Ascending aorta (tissue), 2 donors: ENCODE measurements at regions of chr11 and their contacts with region 1.

Region 1: GRCh38 chr11:12377824-12378593 is 638 bp downstream of the PARVA start:
- DNase-seq: peak in 1 of 2 donors; percentile 91
- H3K4me3 ChIP-seq: peak overlapping the region; percentile 88
- H3K27ac ChIP-seq: peak overlapping the region; percentile 97
- H3K4me1 ChIP-seq: peaks cover 0 to 21% of the 10 kb centered on the region in 2 donors
- H3K27me3 ChIP-seq: no peaks in the 10 kb centered on the region
- CTCF ChIP-seq: peak in 2 of 3 experiments; percentile 5 to 18

Region 2: GRCh38 chr11:12331239-12331874 is 46.7 kb before region 1 on chr11:
- intact Hi-C with region 1: loop called (anchors 2 kb)
- DNase-seq: peak in 1 of 2 donors; percentile 88
- H3K4me3 ChIP-seq: no peak overlapping the region
- H3K27ac ChIP-seq: no peak overlapping the region
- H3K4me1 ChIP-seq: peaks cover 0 to 3% of the 10 kb centered on the region in 2 donors
- H3K27me3 ChIP-seq: no peaks in the 10 kb centered on the region
- CTCF ChIP-seq: peak; percentile 63 to 78 (median 74)

Region 3: GRCh38 chr11:12411806-12412727 is 34.1 kb after region 1 on chr11:
- intact Hi-C with region 1: loop called (anchors 1 kb)
- DNase-seq: peak in 1 of 2 donors; percentile 89
- H3K4me3 ChIP-seq: no peak overlapping the region
- H3K27ac ChIP-seq: peak overlapping the region; percentile 85
- H3K4me1 ChIP-seq: peaks cover 12 to 41% of the 10 kb centered on the region in 2 donors
- H3K27me3 ChIP-seq: no peaks in the 10 kb centered on the region
- CTCF ChIP-seq: peak; percentile 69 to 75 (median 69)

Region 4: DNA sequence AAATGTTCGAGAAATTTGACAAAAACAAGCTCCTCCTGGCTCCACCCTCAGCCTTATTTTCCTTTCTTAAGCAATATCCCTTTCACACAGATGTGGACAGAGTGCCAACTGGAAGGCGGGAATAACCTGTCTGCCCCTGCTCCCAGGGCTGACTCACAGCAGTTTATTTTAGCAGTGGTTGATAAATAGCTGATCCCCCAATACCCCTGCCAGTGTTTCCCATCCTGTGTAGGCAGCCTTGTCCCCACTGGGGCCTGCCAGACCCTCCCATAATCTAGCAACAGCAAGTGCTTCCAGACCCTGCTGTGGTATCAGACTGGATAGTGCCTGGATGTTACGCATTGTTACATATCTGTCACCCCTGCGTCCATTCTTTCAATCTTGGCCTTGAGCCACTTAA is 52.9 kb after region 1 on chr11:
- intact Hi-C with region 1: loop called (anchors 2 kb)
- DNase-seq: peak; percentile 51 to 90
- H3K4me3 ChIP-seq: peak overlapping the region in 1 of 2 donors; percentile 29
- H3K27ac ChIP-seq: peak overlapping the region; percentile 89 to 92
- H3K4me1 ChIP-seq: peaks cover 26 to 50% of the 10 kb centered on the region in 2 donors
- H3K27me3 ChIP-seq: no peaks in the 10 kb centered on the region
- CTCF ChIP-seq: no peak

Region 5: GRCh38 chr11:12456651-12457579 is 78.9 kb after region 1 on chr11:
- intact Hi-C with region 1: loop called (anchors 5 kb)
- DNase-seq: no peak
- H3K4me3 ChIP-seq: no peak overlapping the region
- H3K27ac ChIP-seq: peak overlapping the region; percentile 40 to 68
- H3K4me1 ChIP-seq: peaks cover 7 to 69% of the 10 kb centered on the region in 2 donors
- H3K27me3 ChIP-seq: no peaks in the 10 kb centered on the region
- CTCF ChIP-seq: no peak

Region 6: GRCh38 chr11:12693479-12694181 is 315.6 kb after region 1 on chr11:
- intact Hi-C with region 1: loop called (anchors 5 kb)
- DNase-seq: peak in 1 of 2 donors; percentile 86
- H3K4me3 ChIP-seq: peak overlapping the region; percentile 31 to 47
- H3K27ac ChIP-seq: peak overlapping the region; percentile 93 to 94
- H3K4me1 ChIP-seq: peaks cover 9 to 43% of the 10 kb centered on the region in 2 donors
- H3K27me3 ChIP-seq: no peaks in the 10 kb centered on the region
- CTCF ChIP-seq: no peak